Aorta (tissue), 5 donors: ENCODE measurements at regions of chr3 and their contacts with region 1.

Region 1: GRCh38 chr3:177824190-177824786 is 627.0 kb upstream of the TBL1XR1 start:
- DNase-seq: peak in 1 of 2 donors; percentile 73
- ATAC-seq: peak; percentile 91
- H3K4me3 ChIP-seq: no peak overlapping the region
- H3K27ac ChIP-seq: peak overlapping the region in 1 of 2 donors; percentile 39
- H3K4me1 ChIP-seq: peaks cover 2 to 4% of the 10 kb centered on the region in 2 donors
- H3K27me3 ChIP-seq: no peaks in the 10 kb centered on the region

Region 2: DNA sequence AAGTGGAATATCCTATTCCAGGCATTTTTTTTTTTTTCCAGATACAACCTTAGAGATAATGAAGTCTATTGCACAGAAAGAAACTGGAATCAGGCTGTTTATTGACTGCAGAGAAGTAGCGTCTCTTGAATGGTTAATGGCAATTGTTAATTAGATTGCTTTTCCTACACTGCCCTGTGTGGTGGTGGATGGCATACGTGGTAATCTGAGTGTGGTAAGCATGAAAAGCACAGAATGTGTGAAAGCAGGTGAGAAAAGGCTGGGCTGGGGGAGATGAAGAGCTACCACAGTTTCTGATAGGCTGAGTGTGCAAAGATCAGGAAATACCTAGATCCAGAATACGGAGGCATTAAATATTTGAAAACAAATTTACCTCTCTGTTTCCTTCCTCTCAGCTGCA is 140.7 kb before region 1 on chr3:
- intact Hi-C with region 1: no loop called
- DNase-seq: no peak
- ATAC-seq: no peak
- H3K4me3 ChIP-seq: no peak overlapping the region
- H3K27ac ChIP-seq: no peak overlapping the region
- H3K4me1 ChIP-seq: no peaks in the 10 kb centered on the region
- H3K27me3 ChIP-seq: no peaks in the 10 kb centered on the region

Region 3: GRCh38 chr3:177744873-177745606 is 79.2 kb before region 1 on chr3:
- intact Hi-C with region 1: no loop called
- DNase-seq: no peak
- ATAC-seq: no peak
- H3K4me3 ChIP-seq: no peak overlapping the region
- H3K27ac ChIP-seq: no peak overlapping the region
- H3K4me1 ChIP-seq: peaks cover 0 to 2% of the 10 kb centered on the region in 2 donors
- H3K27me3 ChIP-seq: no peaks in the 10 kb centered on the region

Region 4: DNA sequence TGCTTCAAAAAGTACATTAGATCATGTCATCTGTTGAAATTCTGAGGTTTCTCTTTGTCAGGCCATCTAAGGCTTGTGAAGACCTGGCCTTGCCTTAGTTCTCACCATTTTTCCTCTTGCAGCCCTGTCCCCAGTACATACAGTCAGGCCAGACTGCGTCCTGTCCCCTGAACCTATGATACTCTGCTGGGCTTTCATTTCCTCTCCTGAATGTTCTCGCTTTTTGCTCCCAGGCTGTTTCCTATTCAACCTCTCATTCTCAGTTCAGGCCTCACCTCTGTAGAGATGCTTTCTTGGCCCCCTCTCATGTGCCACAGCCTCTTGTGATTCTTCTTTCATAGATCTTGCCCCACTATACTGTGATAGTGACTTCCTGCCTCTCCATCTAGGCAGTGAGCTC is 63.2 kb after region 1 on chr3:
- intact Hi-C with region 1: loop called in 1 of 2 experiments (anchors 5 kb)
- DNase-seq: no peak
- ATAC-seq: no peak
- H3K4me3 ChIP-seq: no peak overlapping the region
- H3K27ac ChIP-seq: peak overlapping the region; percentile 16 to 57
- H3K4me1 ChIP-seq: peaks cover 2 to 21% of the 10 kb centered on the region in 2 donors
- H3K27me3 ChIP-seq: no peaks in the 10 kb centered on the region